Activated B cell treated with CpG ODN at 0.5 μM for 24 hours (primary cell): ENCODE measurements at regions of chr3 and their contacts with region 1.

Region 1: GRCh38 chr3:149120051-149120972 is 9.1 kb upstream of the HPS3 start:
- DNase-seq: no peak
- ATAC-seq: peak; percentile 81
- H3K4me3 Mint-ChIP-seq: no peak overlapping the region
- H3K27ac Mint-ChIP-seq: no peak overlapping the region
- H3K4me1 Mint-ChIP-seq: peaks cover 7% of the 10 kb centered on the region
- H3K27me3 Mint-ChIP-seq: no peaks in the 10 kb centered on the region
- CTCF ChIP-seq: peak; percentile 16

Region 2: GRCh38 chr3:148991194-148992026 is 128.9 kb before region 1 on chr3 and contains the start of gene GYG1:
- CTCF ChIA-PET with region 1: no interaction called
- POLR2A ChIA-PET with region 1: no interaction called
- intact Hi-C with region 1: loop called (anchors 2 kb)
- DNase-seq: peak; percentile 72
- ATAC-seq: peak; percentile 91
- H3K4me3 Mint-ChIP-seq: peak within 1 kb of the TSS; percentile 84
- H3K27ac Mint-ChIP-seq: peak within 1 kb of the TSS; percentile 69
- H3K4me1 Mint-ChIP-seq: peaks cover 21% of the 10 kb centered on the region
- H3K27me3 Mint-ChIP-seq: no peaks in the 10 kb centered on the region
- CTCF ChIP-seq: no peak
- total RNA-seq, gene GYG1: 20.2 and 21.8 TPM in 2 replicates

Region 3: GRCh38 chr3:149203758-149204157 is 83.4 kb after region 1 on chr3:
- CTCF ChIA-PET with region 1: interaction called, 4 read pairs
- POLR2A ChIA-PET with region 1: no interaction called
- intact Hi-C with region 1: loop called (anchors 5 kb)
- DNase-seq: no peak
- ATAC-seq: peak; percentile 97
- H3K4me3 Mint-ChIP-seq: peak overlapping the region; percentile 17
- H3K27ac Mint-ChIP-seq: peak overlapping the region; percentile 54
- H3K4me1 Mint-ChIP-seq: peaks cover 18% of the 10 kb centered on the region
- H3K27me3 Mint-ChIP-seq: no peaks in the 10 kb centered on the region
- CTCF ChIP-seq: no peak

Region 4: DNA sequence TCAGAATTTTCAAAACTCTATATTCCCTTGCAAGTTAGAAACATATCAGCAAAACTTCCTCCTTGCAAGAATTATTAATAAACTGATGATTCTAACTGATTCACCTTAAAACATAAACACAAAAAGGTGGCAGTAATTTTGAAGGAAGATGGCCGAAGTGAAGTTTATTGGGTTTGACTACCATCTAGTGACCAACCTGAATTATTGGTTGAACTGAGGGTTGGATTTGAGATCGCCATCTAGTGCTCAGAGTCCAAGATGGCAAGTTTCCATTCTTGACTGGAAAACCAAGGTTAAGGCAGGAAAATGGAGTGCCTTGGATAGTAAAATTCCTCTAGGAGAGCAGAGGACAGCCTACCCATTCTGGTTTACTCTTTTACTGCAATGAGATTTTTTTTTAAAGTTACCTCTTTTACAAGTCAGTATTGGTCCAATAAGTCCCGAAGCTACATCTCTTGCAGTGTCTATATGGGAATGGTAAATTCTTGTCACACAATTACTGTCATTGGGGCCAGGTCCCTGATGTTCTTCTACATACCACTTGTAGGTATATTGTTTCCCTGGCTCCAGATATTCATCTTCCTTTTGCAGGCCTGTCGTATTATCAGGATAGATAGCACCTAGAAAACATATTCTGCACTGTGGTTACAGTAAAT is 152.9 kb after region 1 on chr3:
- CTCF ChIA-PET with region 1: interaction called, 208 read pairs
- POLR2A ChIA-PET with region 1: interaction called, 3 read pairs
- intact Hi-C with region 1: loop called (anchors 1 kb)
- DNase-seq: no peak
- ATAC-seq: peak; percentile 88
- H3K4me3 Mint-ChIP-seq: no peak overlapping the region
- H3K27ac Mint-ChIP-seq: no peak overlapping the region
- H3K4me1 Mint-ChIP-seq: peaks cover 19% of the 10 kb centered on the region
- H3K27me3 Mint-ChIP-seq: no peaks in the 10 kb centered on the region
- CTCF ChIP-seq: peak; percentile 92

Region 5: DNA sequence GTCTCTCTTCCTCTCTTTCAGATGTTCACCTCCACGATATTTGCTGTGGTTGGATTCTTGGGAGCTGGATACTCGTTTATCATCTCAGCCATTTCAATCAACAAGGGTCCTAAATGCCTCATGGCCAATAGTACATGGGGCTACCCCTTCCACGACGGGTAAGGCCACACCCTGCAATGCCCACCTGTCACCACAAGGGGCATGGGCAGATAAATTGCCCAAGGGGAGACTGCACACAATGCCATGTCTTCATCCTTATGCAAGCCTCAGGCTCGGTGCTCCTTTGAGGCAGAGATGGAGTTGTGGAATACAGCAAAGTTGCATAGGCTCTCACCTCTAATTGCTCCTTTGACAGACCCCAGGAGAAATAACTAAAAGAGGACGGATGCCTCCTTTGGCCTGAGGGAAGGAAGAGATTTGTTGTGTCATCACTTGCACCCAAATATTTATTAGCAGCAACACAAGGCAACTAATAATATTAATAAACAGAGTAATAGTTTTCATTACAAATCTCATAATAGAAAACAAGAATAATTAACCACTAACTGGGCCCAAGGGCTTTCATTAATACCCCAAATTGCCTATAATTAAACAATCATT is 367.4 kb after region 1 on chr3:
- CTCF ChIA-PET with region 1: no interaction called
- POLR2A ChIA-PET with region 1: no interaction called
- intact Hi-C with region 1: loop called (anchors 2 kb)
- DNase-seq: no peak
- ATAC-seq: peak; percentile 45
- H3K4me3 Mint-ChIP-seq: no peak overlapping the region
- H3K27ac Mint-ChIP-seq: no peak overlapping the region
- H3K4me1 Mint-ChIP-seq: no peaks in the 10 kb centered on the region
- H3K27me3 Mint-ChIP-seq: peaks cover 11% of the 10 kb centered on the region
- CTCF ChIP-seq: no peak